Pancreas (tissue), 10 donors: ENCODE measurements at regions of chr1 and their contacts with region 1.

Region 1: GRCh38 chr1:113904674-113905434 is at the starts of genes AP4B1 and DCLRE1B:
- DNase-seq: peak; percentile 95 to 99 (median 99)
- ATAC-seq: peak; percentile 93 to 97 (median 95)
- H3K4me3 ChIP-seq: peak within 1 kb of the TSS; percentile 56 to 90 (median 65)
- H3K27ac ChIP-seq: peak within 1 kb of the TSS; percentile 64 to 94 (median 85)
- H3K4me1 ChIP-seq: peaks cover 4 to 14% (median 6%) of the 10 kb centered on the region in 3 donors
- H3K27me3 ChIP-seq: no peaks in the 10 kb centered on the region
- CTCF ChIP-seq: peak in 3 of 4 donors; percentile 23 to 49 (median 40)
- total RNA-seq, gene AP4B1: 8.2 to 16.4 (median 11.8) TPM
- total RNA-seq, gene DCLRE1B: 0.71 to 2.7 (median 1.5) TPM

Region 2: GRCh38 chr1:113835642-113836307 is 69.1 kb before region 1 on chr1:
- intact Hi-C with region 1: loop called in 1 of 3 experiments (anchors 10 kb)
- DNase-seq: no peak
- ATAC-seq: peak in 3 of 4 donors; percentile 54 to 63 (median 57)
- H3K4me3 ChIP-seq: no peak overlapping the region
- H3K27ac ChIP-seq: no peak overlapping the region
- H3K4me1 ChIP-seq: no peaks in the 10 kb centered on the region
- H3K27me3 ChIP-seq: no peaks in the 10 kb centered on the region
- CTCF ChIP-seq: peak; percentile 18 to 55 (median 36)

Region 3: GRCh38 chr1:114289306-114289705 is 384.5 kb after region 1 on chr1:
- intact Hi-C with region 1: no loop called
- DNase-seq: no peak
- ATAC-seq: no peak
- H3K4me3 ChIP-seq: no peak overlapping the region
- H3K27ac ChIP-seq: no peak overlapping the region
- H3K4me1 ChIP-seq: no peaks in the 10 kb centered on the region
- H3K27me3 ChIP-seq: no peaks in the 10 kb centered on the region
- CTCF ChIP-seq: no peak